ENCODE measurements at regions of chr3 and their contacts with region 1.

Region 1: DNA sequence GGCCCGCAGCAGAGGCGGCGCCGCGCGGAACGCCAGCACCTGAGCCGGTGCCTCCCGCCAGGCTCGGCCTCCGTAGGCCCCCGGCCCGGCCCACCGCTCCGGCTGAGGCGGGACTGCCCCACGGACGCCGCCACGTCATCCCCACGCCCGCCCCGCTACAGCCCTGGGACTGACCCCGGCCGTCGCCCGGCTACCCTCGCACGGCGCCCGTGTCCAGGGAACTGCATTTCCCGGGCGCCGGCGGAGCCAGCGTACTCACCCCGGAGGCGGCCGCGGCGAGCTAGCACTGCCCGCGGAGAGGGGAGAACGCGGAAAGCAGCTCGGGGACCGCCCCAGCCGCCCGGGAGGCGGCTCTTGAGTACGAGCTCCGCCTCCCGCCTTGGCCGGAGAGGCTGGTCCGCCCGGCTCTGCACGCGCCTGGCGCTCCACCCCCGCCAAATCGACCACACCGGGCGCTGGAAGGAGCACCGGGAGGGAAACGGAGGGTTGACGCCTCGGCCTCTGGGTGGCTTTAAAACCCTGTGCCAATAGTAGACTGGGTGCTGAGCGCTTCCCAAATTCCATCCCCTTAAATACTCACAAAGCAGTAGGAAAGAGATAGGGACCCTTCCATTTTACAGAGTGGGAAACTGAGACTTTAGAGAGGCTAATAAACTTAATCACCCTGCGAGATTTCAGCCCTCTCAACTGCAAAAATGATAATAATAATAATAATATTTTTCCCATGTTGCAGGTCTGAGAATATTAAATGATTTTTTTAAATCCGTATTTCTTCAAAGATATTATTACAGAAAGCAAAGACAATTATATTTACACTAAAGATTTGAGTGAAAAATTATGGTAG is at the start of gene B4GALT4:
- DNase-seq: peak; percentile 66 to 76 (median 75)
- H3K4me3 ChIP-seq: peak within 1 kb of the TSS; percentile 59 to 84 (median 83)
- H3K4me3 Mint-ChIP-seq: peak within 1 kb of the TSS; percentile 80 to 92
- H3K27ac ChIP-seq: peak within 1 kb of the TSS; percentile 58 to 90
- H3K27ac Mint-ChIP-seq: peak within 1 kb of the TSS; percentile 86 to 92 (median 90)
- H3K4me1 ChIP-seq: peaks cover 28 to 48% of the 10 kb centered on the region in 2 donors
- H3K4me1 Mint-ChIP-seq: peaks cover 39% of the 10 kb centered on the region
- H3K27me3 ChIP-seq: no peaks in the 10 kb centered on the region
- H3K27me3 Mint-ChIP-seq: no peaks in the 10 kb centered on the region
- CTCF ChIP-seq: no peak
- polyA plus RNA-seq, gene B4GALT4: 5.8 to 7.4 (median 5.8) TPM

Region 2: DNA sequence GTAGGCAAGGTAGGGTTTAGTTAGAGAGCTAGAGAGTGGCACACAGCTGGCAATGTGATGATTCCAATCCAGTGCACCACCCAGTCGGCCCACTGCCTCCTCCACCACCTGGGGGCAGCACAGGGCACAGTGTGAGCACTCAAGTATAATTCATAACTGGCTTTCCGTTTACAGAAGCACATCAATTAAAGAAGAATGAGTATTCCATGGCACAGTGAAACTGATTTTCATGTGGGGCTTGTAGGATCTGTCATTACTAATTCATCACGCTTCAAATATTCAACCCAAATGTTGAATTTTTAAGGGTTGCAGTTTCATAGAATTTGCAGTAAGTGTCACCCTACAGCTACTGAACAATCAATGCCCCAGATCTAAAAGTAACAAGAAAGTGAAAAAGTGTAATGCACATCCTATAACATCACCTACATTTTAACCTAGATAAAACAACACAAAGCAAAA is 356.0 kb before region 1 on chr3:
- intact Hi-C with region 1: loop called (anchors 2 to 10 kb)
- DNase-seq: peak; percentile 15 to 30 (median 28)
- H3K4me3 ChIP-seq: no peak overlapping the region
- H3K4me3 Mint-ChIP-seq: no peak overlapping the region
- H3K27ac ChIP-seq: no peak overlapping the region
- H3K27ac Mint-ChIP-seq: no peak overlapping the region
- H3K4me1 ChIP-seq: no peaks in the 10 kb centered on the region
- H3K4me1 Mint-ChIP-seq: no peaks in the 10 kb centered on the region
- H3K27me3 ChIP-seq: no peaks in the 10 kb centered on the region
- H3K27me3 Mint-ChIP-seq: peaks cover 0 to 8% (median 3%) of the 10 kb centered on the region in 3 donors
- CTCF ChIP-seq: peak; percentile 78

Region 3: DNA sequence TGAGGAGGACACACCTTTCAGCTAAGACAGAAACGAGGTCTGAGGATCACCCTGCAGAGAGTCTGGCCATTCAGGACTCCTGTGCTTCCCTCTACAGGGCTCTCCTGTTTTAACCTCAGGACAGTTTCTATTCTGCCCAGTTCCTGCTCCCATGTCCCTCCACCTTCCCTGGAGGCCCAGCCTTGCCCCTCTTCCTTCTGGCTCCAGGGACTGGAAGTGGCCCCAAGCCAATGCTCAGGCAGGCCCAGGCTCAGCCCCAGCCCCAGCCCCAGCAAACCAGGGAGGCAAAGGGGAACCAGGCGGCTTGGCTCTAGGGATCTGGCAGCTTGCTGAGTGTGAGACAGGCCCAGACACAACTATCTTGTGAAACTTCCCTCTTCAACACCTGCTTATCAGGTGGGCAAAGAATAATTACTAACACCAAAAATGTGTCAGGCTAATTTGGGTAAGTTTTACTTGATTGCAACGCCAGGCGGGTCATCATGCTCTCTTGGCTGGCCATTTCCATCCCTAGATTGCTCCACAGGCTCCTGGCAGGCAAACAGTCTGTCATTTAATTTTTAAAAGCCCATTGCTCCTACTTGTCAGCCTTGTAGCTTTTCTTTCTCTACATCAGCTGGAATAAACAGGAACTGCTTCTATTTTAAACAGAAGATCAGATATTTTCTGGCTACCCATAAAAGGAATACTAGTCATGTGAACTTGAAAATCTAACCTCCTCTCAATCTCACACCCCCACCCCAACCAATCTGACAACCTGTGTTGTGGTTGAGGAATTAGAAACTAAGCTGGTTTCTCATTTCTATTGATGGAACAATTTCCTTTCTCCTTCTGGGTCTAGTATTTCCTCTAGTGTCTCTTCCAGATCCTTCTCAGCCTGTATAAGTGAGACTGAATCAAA is 34.0 kb before region 1 on chr3:
- intact Hi-C with region 1: no loop called
- DNase-seq: no peak
- H3K4me3 ChIP-seq: no peak overlapping the region
- H3K4me3 Mint-ChIP-seq: no peak overlapping the region
- H3K27ac ChIP-seq: no peak overlapping the region
- H3K27ac Mint-ChIP-seq: no peak overlapping the region
- H3K4me1 ChIP-seq: no peaks in the 10 kb centered on the region
- H3K4me1 Mint-ChIP-seq: peaks cover 4% of the 10 kb centered on the region
- H3K27me3 ChIP-seq: no peaks in the 10 kb centered on the region
- H3K27me3 Mint-ChIP-seq: peaks cover 0 to 2% (median 0%) of the 10 kb centered on the region in 3 donors
- CTCF ChIP-seq: no peak

Region 4: DNA sequence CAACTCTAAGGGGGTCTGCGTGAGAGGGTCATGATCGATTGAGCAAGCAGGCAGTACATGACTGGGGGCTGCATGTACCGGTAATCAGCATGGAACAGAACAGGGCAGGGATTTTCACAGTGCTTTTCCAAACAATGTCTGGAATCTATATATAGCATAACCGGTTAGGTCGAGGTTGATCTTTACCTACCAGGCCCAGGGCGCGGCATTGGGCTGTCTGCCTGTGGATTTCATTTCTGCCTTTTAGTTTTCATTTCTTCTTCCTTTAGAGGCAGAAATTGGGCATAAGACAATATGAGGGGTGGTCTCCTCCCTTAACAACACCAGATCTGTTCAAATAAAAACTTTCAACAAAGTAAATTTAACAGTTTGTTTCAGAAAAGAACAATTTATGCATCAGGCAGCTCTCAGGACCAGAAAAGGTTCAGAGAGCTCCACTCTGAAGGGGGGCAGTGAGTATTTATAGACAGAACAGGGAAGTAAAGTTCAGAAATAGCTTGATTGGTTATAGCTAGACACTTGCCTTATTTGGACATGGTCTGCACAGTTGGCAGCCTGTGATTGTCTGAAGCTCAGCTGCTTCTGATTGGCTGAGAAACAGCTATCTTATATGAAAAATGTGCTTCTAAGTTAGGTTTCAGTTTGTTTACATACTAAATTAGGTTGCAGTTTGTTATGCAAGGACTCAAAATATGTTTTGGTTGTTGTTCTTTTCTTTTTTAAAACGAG is 17.0 kb after region 1 on chr3:
- intact Hi-C with region 1: no loop called
- DNase-seq: peak; percentile 16 to 44 (median 25)
- H3K4me3 ChIP-seq: peak overlapping the region in 1 of 3 experiments; percentile 22
- H3K4me3 Mint-ChIP-seq: peak overlapping the region in 1 of 2 donors; percentile 26
- H3K27ac ChIP-seq: peak overlapping the region in 1 of 2 donors; percentile 50
- H3K27ac Mint-ChIP-seq: peak overlapping the region in 4 of 7 donors; percentile 61 to 75 (median 64)
- H3K4me1 ChIP-seq: peaks cover 12 to 24% of the 10 kb centered on the region in 2 donors
- H3K4me1 Mint-ChIP-seq: peaks cover 30% of the 10 kb centered on the region
- H3K27me3 ChIP-seq: no peaks in the 10 kb centered on the region
- H3K27me3 Mint-ChIP-seq: peaks cover 1 to 3% (median 2%) of the 10 kb centered on the region in 3 donors
- CTCF ChIP-seq: no peak

Measured in CD14-positive monocyte (primary cell).